ENCODE measurements at regions of chr17 and their contacts with region 1.

Region 1: DNA sequence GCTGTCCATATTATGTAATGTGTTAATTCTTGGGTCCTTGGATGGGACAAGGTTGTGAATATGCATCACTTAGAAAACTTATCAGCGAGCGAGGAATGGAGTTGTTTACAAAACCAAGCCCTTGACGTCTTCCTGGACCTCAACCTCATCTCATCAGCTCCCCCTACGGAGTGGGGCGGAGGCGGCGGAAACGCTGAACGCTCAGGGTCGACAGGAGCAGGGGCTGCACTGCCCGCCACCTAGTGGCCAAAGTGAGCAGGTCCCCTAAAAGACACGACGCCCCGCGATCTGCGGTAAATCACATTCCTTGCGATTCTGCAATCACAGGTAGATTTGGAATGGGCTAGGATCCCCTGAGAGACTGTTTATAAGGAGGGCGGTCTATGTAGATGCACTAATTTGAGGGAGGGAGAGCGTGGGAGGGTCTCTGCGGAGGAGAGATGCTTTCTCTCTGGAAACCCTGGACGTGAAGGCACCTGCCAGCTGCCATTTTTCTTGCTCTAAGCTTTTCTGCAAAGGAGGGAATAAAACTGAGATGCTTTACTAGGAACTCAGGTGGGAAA is 5.4 kb upstream of the ICAM2 start:
- DNase-seq: peak; percentile 97
- ATAC-seq: peak; percentile 87
- H3K4me3 Mint-ChIP-seq: peak overlapping the region; percentile 65
- H3K27ac Mint-ChIP-seq: peak overlapping the region; percentile 92
- H3K4me1 Mint-ChIP-seq: peaks cover 60% of the 10 kb centered on the region
- H3K27me3 Mint-ChIP-seq: no peaks in the 10 kb centered on the region

Region 2: GRCh38 chr17:63919311-63919723 is 106.5 kb before region 1 on chr17:
- CTCF ChIA-PET with region 1: interaction called, 94 read pairs
- DNase-seq: peak; percentile 81
- ATAC-seq: peak; percentile 96
- H3K4me3 Mint-ChIP-seq: no peak overlapping the region
- H3K27ac Mint-ChIP-seq: no peak overlapping the region
- H3K4me1 Mint-ChIP-seq: peaks cover 5% of the 10 kb centered on the region
- H3K27me3 Mint-ChIP-seq: peaks cover 11% of the 10 kb centered on the region

Region 3: DNA sequence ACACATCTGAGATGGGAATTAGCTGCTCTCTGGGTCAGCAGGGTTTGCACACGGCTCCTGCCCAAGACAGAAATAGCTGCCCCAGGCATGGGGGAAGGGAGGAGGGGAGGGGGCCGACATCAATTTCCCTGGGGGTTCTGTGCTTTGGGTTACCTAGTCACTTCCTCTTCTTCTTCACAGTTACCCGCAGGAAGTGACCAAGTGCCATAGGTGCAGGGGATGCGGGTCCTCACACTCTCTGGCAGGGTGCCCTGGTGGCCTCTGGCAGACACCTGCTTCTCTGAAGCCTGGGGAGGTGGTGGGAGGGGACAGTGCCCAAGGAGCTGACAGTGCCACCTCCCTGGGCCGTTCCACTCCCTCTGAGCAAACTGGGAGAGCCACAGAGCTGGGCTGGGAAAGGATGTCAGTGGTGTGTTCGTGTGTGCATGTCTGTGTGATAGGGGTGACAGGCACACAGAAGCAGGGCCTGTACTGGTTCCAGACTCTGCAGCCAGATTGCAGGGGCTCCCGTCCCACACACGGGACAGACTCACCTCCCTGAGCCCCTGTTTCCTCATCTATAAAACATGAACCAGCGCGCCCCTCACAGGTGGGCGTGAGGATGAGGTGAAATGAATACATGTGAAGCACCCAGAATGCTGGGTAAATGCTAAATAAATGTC is 71.3 kb before region 1 on chr17:
- CTCF ChIA-PET with region 1: interaction called, 23 read pairs
- DNase-seq: peak; percentile 61
- ATAC-seq: peak; percentile 64
- H3K4me3 Mint-ChIP-seq: no peak overlapping the region
- H3K27ac Mint-ChIP-seq: peak overlapping the region; percentile 63
- H3K4me1 Mint-ChIP-seq: peaks cover 20% of the 10 kb centered on the region
- H3K27me3 Mint-ChIP-seq: no peaks in the 10 kb centered on the region

Region 4: DNA sequence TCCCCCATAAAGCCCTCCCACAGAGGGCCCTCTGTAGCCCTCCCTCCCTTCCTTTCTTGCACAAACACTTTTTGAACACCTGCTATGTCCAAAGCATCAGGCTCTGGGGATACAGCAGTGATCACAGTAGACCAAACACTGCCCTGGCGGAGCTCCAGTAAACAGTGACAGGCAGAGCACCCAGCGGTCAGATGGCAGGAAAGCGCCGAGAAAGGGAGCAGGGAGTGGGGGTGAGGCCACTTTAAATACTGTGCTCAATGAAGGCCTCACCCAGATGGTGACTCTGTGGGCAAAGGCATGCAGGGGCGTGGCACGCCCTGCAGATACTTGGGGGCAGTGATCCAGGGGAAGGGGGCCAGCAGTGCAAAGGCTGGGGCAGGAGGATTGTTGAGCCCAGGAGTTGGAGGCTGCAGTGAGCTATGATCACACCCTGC is 20.1 kb before region 1 on chr17:
- CTCF ChIA-PET with region 1: interaction called, 14 read pairs
- DNase-seq: no peak
- ATAC-seq: no peak
- H3K4me3 Mint-ChIP-seq: no peak overlapping the region
- H3K27ac Mint-ChIP-seq: no peak overlapping the region
- H3K4me1 Mint-ChIP-seq: peaks cover 19% of the 10 kb centered on the region
- H3K27me3 Mint-ChIP-seq: no peaks in the 10 kb centered on the region

Region 5: GRCh38 chr17:64081802-64082799 is 56.3 kb after region 1 on chr17:
- CTCF ChIA-PET with region 1: interaction called, 18 read pairs
- DNase-seq: peak; percentile 84
- ATAC-seq: peak; percentile 91
- H3K4me3 Mint-ChIP-seq: peak overlapping the region; percentile 16
- H3K27ac Mint-ChIP-seq: peak overlapping the region; percentile 83
- H3K4me1 Mint-ChIP-seq: peaks cover 11% of the 10 kb centered on the region
- H3K27me3 Mint-ChIP-seq: no peaks in the 10 kb centered on the region

Region 6: DNA sequence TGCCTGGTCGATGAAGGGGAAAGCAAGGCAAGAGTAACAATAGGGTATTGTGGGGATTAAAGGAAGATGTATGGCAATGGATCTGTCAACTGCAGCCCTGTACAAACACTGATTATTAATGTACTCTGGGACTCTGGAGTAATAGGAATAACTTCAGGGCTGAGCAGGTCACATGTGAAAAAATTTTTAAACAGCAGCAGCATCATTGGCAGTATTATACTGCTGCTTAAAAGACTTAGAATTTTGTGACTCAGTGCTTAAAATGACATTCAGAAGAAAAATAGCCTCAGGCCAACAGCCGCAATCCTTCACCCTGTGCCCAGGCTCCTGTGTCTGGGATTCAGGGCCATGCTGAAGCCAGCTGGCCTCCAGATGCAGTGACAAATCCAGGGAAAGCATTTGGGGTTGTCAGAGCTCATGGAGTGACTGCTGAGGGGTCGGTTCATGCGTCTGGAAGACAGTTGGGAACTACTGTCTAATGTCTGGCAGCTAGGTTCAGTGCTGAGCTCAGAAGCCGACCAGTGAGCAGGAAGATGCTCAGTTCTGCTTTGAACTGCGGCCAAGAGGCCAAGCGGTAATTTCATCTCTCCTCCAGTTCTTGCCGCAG is 215.0 kb after region 1 on chr17:
- CTCF ChIA-PET with region 1: no interaction called
- DNase-seq: no peak
- ATAC-seq: no peak
- H3K4me3 Mint-ChIP-seq: no peak overlapping the region
- H3K27ac Mint-ChIP-seq: no peak overlapping the region
- H3K4me1 Mint-ChIP-seq: peaks cover 2% of the 10 kb centered on the region
- H3K27me3 Mint-ChIP-seq: no peaks in the 10 kb centered on the region